Activated naive CD8-positive, alpha-beta T cell treated with anti-CD3 and anti-CD28 coated beads, Interleukin-2, amount 10 ng/mL, durations not matched to agents 7 days and 5 days (primary cell): ENCODE measurements at regions of chr20 and their contacts with region 1.

Region 1: GRCh38 chr20:49594143-49594930 is 26.4 kb upstream of the PTGIS start:
- DNase-seq: peak; percentile 67
- ATAC-seq: peak; percentile 79
- H3K4me3 Mint-ChIP-seq: peak overlapping the region; percentile 76
- H3K27ac Mint-ChIP-seq: peak overlapping the region; percentile 97
- H3K4me1 Mint-ChIP-seq: peaks cover 75% of the 10 kb centered on the region
- H3K27me3 Mint-ChIP-seq: no peaks in the 10 kb centered on the region

Region 2: DNA sequence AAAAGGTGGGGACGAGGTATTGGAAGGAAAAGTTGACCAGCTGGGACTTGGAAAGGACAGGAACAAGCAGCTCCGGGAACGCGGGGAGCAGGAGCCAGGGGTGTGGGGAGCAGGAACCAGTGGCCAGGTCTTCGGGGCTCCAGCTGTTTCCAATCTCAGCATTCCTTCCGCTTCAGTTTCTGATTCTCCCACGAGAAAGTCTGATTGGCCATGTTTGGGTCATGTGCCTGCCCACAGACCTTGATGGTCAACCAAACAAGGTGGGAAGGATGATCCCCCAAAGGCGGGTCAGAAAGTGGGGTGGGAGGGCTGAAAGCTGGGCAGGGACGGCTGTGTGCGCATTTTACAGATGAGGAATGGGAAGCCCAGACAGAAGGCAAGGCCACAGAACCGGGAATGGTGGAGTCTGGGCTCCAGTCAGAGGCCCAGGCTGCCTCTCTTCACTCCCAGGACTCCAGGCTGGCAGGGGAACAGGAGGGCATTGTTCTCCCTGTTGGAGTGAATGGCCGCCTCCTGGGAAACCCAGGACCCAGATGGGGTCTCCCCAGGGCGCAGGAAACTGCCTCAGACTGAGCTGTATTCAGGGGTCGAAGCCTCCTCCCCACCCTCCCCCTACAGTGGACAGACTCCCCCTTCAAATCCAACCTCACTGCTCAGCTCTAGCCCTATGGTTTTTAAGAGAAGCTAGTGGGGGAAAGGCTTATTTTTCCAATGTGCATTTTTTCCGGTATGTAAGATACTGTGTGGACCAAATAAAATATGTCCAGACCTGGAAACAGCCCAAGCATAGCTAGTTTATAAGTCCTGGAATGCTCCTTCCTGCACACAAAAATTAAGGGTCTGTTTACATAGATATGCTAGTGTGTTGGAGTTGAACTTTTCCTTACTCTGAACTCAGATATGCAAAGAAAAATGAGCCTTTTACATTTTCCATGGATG is 14.2 kb before region 1 on chr20:
- POLR2A ChIA-PET with region 1: interaction called, 13 read pairs
- DNase-seq: no peak
- ATAC-seq: no peak
- H3K4me3 Mint-ChIP-seq: no peak overlapping the region
- H3K27ac Mint-ChIP-seq: no peak overlapping the region
- H3K4me1 Mint-ChIP-seq: peaks cover 33% of the 10 kb centered on the region
- H3K27me3 Mint-ChIP-seq: peaks cover 14% of the 10 kb centered on the region